Heart right ventricle (tissue), 16 donors: ENCODE measurements at regions of chr9 and their contacts with region 1.

Region 1: DNA sequence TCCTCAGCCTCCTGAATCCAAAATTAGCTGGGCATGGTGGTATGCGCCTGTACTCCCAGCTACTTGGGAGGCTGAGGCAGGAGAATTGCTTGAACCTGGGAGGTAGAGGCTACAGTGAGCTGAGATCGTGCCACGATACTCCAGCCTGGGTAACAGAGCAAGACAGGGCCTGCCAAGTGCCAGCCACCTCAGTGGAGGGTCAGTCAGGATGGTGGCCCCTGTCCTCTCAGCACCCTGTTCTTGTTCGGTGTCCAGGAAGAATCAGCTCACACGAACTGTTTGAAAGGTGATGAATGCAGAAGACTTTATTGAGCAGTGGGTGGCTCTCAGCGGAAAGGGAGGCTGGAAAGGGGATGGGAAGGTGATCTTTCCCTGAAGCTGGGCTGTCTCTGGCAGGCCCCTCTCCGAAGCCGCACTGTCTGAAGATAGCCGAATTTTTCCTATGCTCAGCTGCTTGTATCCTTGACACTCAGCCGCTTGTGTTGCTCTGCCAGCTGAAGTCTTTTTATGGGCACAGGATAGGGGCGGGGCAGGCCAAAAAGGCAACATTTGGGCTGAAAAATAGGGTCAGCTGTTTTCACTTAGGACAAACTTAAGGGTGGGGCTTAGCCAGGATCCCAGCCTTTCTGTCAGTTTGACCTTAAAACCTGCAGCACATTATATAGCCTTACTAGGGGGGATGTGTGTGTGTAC is 50.9 kb downstream of the UBE2R2 start:
- DNase-seq: peak; percentile 51 to 54
- ATAC-seq: peak; percentile 80 to 88 (median 86)
- H3K4me3 ChIP-seq: peak overlapping the region in 1 of 10 donors; percentile 10
- H3K27ac ChIP-seq: peak overlapping the region in 9 of 10 donors; percentile 32 to 73 (median 60)
- H3K4me1 ChIP-seq: peaks cover 9 to 56% (median 37%) of the 10 kb centered on the region in 9 donors
- H3K27me3 ChIP-seq: no peaks in the 10 kb centered on the region
- CTCF ChIP-seq: no peak

Region 2: GRCh38 chr9:33816327-33817252 is 51.3 kb before region 1 on chr9 and contains the start of gene UBE2R2:
- intact Hi-C with region 1: no loop called
- DNase-seq: peak; percentile 94
- ATAC-seq: peak; percentile 89 to 94 (median 92)
- H3K4me3 ChIP-seq: peak within 1 kb of the TSS; percentile 65 to 96 (median 90)
- H3K27ac ChIP-seq: peak within 1 kb of the TSS; percentile 98 to 100 (median 99)
- H3K4me1 ChIP-seq: peaks cover 6 to 63% (median 51%) of the 10 kb centered on the region in 9 donors
- H3K27me3 ChIP-seq: no peaks in the 10 kb centered on the region
- CTCF ChIP-seq: no peak
- total RNA-seq, gene UBE2R2: 38.8 to 47.9 (median 41.5) TPM

Region 3: GRCh38 chr9:33903157-33903780 is 35.4 kb after region 1 on chr9:
- intact Hi-C with region 1: no loop called
- DNase-seq: no peak
- ATAC-seq: no peak
- H3K4me3 ChIP-seq: no peak overlapping the region
- H3K27ac ChIP-seq: no peak overlapping the region
- H3K4me1 ChIP-seq: peaks cover 0 to 41% (median 21%) of the 10 kb centered on the region in 9 donors
- H3K27me3 ChIP-seq: no peaks in the 10 kb centered on the region
- CTCF ChIP-seq: no peak

Region 4: DNA sequence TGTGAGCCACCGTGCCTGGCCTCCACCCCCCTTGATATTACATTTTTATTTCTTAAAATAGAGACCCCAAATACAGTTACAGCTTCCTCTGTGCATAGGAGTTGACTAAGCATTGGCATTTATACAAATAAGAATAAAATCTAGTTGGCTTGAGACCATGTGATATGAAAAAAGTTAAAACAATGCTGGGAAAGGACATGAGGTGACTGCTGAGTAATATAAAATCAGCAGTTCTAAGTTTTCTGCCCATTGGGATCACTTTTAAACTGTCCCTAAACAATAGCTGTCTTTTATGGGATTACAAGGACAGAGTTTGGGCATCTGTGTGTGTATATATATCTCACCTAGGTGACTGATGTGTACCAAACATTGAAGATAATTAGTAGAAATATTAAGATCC is 45.6 kb after region 1 on chr9:
- intact Hi-C with region 1: loop called in 1 of 10 experiments (anchors 5 kb)
- DNase-seq: no peak
- ATAC-seq: peak in 1 of 8 donors; percentile 14
- H3K4me3 ChIP-seq: no peak overlapping the region
- H3K27ac ChIP-seq: no peak overlapping the region
- H3K4me1 ChIP-seq: peaks cover 0 to 23% (median 7%) of the 10 kb centered on the region in 9 donors
- H3K27me3 ChIP-seq: no peaks in the 10 kb centered on the region
- CTCF ChIP-seq: no peak

Region 5: GRCh38 chr9:34025062-34025461 is 157.2 kb after region 1 on chr9:
- intact Hi-C with region 1: no loop called
- DNase-seq: peak in 1 of 2 donors; percentile 22
- ATAC-seq: peak; percentile 69 to 96 (median 90)
- H3K4me3 ChIP-seq: no peak overlapping the region
- H3K27ac ChIP-seq: peak overlapping the region in 9 of 10 donors; percentile 33 to 69 (median 60)
- H3K4me1 ChIP-seq: peaks cover 0 to 28% (median 8%) of the 10 kb centered on the region in 9 donors
- H3K27me3 ChIP-seq: no peaks in the 10 kb centered on the region
- CTCF ChIP-seq: no peak